PC-9 (cell line): ENCODE measurements at regions of chr7 and their contacts with region 1.

Region 1: GRCh38 chr7:75617634-75618234 is 121.0 kb downstream of the HIP1 start:
- DNase-seq: peak; percentile 89 to 99
- H3K4me3 ChIP-seq: peak overlapping the region; percentile 7; the same call in 1 of the 2 replicates
- H3K27ac ChIP-seq: peak overlapping the region; percentile 96
- H3K4me1 ChIP-seq: peaks cover 27% of the 10 kb centered on the region
- H3K27me3 ChIP-seq: no peaks in the 10 kb centered on the region
- CTCF ChIP-seq: no peak

Region 2: GRCh38 chr7:74665296-74665938 is 952.3 kb before region 1 on chr7:
- CTCF ChIA-PET with region 1: no interaction called
- POLR2A ChIA-PET with region 1: interaction called, 16 read pairs
- intact Hi-C with region 1: no loop called
- DNase-seq: peak in 1 of 2 experiments; percentile 10
- H3K4me3 ChIP-seq: no peak overlapping the region
- H3K27ac ChIP-seq: no peak overlapping the region
- H3K4me1 ChIP-seq: peaks cover 37% of the 10 kb centered on the region
- H3K27me3 ChIP-seq: no peaks in the 10 kb centered on the region
- CTCF ChIP-seq: no peak

Region 3: GRCh38 chr7:75565132-75565837 is 52.4 kb before region 1 on chr7:
- CTCF ChIA-PET with region 1: no interaction called
- POLR2A ChIA-PET with region 1: interaction called, 44 read pairs
- intact Hi-C with region 1: no loop called
- DNase-seq: peak; percentile 82 to 94
- H3K4me3 ChIP-seq: 0 out of 2 replicates have a peak overlapping the region, but pooled peaks have one; percentile 10
- H3K27ac ChIP-seq: peak overlapping the region; percentile 65
- H3K4me1 ChIP-seq: peaks cover 26% of the 10 kb centered on the region
- H3K27me3 ChIP-seq: no peaks in the 10 kb centered on the region
- CTCF ChIP-seq: no peak